Naive thymus-derived CD4-positive, alpha-beta T cell (primary cell): ENCODE measurements at regions of chr10 and their contacts with region 1.

Region 1: GRCh38 chr10:102673819-102674511 is 29.7 kb downstream of the TRIM8 start:
- DNase-seq: peak; percentile 34 to 91 (median 89)
- ATAC-seq: peak; percentile 91
- H3K4me3 ChIP-seq: peak overlapping the region; percentile 52
- H3K4me3 Mint-ChIP-seq: peak overlapping the region; percentile 78 to 93 (median 85)
- H3K27ac ChIP-seq: peak overlapping the region; percentile 85
- H3K27ac Mint-ChIP-seq: peak overlapping the region; percentile 75 to 97 (median 91)
- H3K4me1 ChIP-seq: peaks cover 18 to 41% of the 10 kb centered on the region in 2 donors
- H3K4me1 Mint-ChIP-seq: peaks cover 36 to 82% (median 58%) of the 10 kb centered on the region in 7 donors
- H3K27me3 ChIP-seq: no peaks in the 10 kb centered on the region
- H3K27me3 Mint-ChIP-seq: no peaks in the 10 kb centered on the region

Region 2: DNA sequence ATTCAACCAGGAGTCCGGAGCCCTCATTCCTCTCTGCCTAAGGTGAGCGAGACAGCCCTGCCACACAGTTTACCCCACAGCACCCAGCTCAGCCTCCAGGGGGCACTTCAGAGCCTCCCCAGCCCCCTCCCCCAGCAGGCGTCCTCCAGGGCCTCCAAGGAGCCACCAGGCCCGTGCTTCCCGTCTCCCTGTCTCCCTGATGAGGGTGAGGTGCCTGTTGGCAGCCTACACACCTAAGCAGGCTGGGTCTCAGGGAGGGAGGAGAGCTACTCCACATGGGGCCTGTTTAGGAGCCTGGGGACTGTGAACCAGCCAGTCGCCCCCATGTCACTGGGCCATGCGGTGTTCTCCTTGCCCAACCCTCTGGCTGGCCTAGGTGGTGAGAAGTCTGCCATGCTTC is 58.6 kb before region 1 on chr10:
- CTCF ChIA-PET with region 1: no interaction called
- POLR2A ChIA-PET with region 1: interaction called, 3 read pairs
- intact Hi-C with region 1: loop called in 1 of 2 experiments (anchors 5 kb)
- DNase-seq: no peak
- ATAC-seq: no peak
- H3K4me3 ChIP-seq: no peak overlapping the region
- H3K4me3 Mint-ChIP-seq: no peak overlapping the region
- H3K27ac ChIP-seq: no peak overlapping the region
- H3K27ac Mint-ChIP-seq: peak overlapping the region in 6 of 9 donors; percentile 29 to 84 (median 53)
- H3K4me1 ChIP-seq: peaks cover 0 to 35% of the 10 kb centered on the region in 2 donors
- H3K4me1 Mint-ChIP-seq: peaks cover 7 to 36% (median 32%) of the 10 kb centered on the region in 7 donors
- H3K27me3 ChIP-seq: no peaks in the 10 kb centered on the region
- H3K27me3 Mint-ChIP-seq: no peaks in the 10 kb centered on the region

Region 3: GRCh38 chr10:102652170-102652916 is 21.6 kb before region 1 on chr10:
- CTCF ChIA-PET with region 1: interaction called, 22 read pairs
- POLR2A ChIA-PET with region 1: interaction called, 169 read pairs
- intact Hi-C with region 1: no loop called
- DNase-seq: no peak
- ATAC-seq: peak; percentile 14
- H3K4me3 ChIP-seq: peak overlapping the region; percentile 37
- H3K4me3 Mint-ChIP-seq: peak overlapping the region; percentile 44 to 99 (median 70)
- H3K27ac ChIP-seq: peak overlapping the region; percentile 98
- H3K27ac Mint-ChIP-seq: peak overlapping the region; percentile 41 to 96 (median 92)
- H3K4me1 ChIP-seq: peaks cover 58 to 59% of the 10 kb centered on the region in 2 donors
- H3K4me1 Mint-ChIP-seq: peaks cover 62 to 75% (median 68%) of the 10 kb centered on the region in 7 donors
- H3K27me3 ChIP-seq: no peaks in the 10 kb centered on the region
- H3K27me3 Mint-ChIP-seq: no peaks in the 10 kb centered on the region

Region 4: DNA sequence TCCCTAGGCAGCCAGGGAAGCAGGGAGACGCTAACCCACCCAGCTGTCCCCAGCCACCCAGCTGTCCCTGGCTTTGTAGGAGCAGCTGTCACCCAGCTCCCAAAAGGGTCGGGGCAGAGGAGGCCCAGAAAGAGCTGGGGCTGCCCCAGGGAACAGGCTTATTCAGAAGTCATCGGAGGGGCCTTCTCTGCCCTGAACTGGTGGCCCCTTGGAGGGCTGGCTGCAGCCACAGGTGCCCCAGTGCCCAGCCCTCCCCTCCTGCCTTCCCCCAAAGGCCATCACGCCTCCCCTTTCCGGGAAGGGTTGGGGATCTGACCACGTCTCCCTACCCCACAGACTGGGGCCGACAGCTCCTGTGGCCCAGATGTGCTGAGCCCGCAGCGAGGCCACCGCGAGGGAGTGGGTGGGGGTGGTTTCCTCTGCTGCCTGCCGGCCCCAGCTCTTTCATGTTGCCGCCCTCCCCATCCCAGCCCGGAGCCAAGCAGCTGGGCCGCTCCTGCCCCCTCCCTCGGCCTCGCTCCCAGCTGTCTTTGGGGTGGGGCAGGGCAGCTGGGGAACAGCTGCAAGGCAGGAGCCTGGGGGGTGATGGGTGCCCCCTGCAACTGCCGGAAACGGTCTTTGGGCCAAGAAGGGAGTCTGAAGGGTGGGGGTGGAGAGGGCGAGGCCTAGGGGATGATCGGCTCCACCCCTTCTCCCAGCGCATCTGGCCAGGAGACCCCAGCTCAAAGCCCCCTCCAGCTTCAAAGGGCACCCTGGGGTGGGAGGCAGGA is 12.9 kb before region 1 on chr10:
- CTCF ChIA-PET with region 1: interaction called, 6 read pairs
- POLR2A ChIA-PET with region 1: interaction called, 68 read pairs
- intact Hi-C with region 1: loop called (anchors 1 kb)
- DNase-seq: peak in 7 of 9 donors; percentile 24 to 84 (median 44)
- ATAC-seq: peak; percentile 85
- H3K4me3 ChIP-seq: peak overlapping the region; percentile 35
- H3K4me3 Mint-ChIP-seq: peak overlapping the region; percentile 33 to 76 (median 64)
- H3K27ac ChIP-seq: peak overlapping the region; percentile 46
- H3K27ac Mint-ChIP-seq: peak overlapping the region in 7 of 9 donors; percentile 28 to 90 (median 79)
- H3K4me1 ChIP-seq: peaks cover 17 to 34% of the 10 kb centered on the region in 2 donors
- H3K4me1 Mint-ChIP-seq: peaks cover 27 to 48% (median 38%) of the 10 kb centered on the region in 7 donors
- H3K27me3 ChIP-seq: no peaks in the 10 kb centered on the region
- H3K27me3 Mint-ChIP-seq: no peaks in the 10 kb centered on the region

Region 5: GRCh38 chr10:102743588-102744373 is 69.8 kb after region 1 on chr10 and contains the start of gene WBP1L:
- CTCF ChIA-PET with region 1: no interaction called
- POLR2A ChIA-PET with region 1: no interaction called
- intact Hi-C with region 1: loop called in 1 of 2 experiments (anchors 1 kb)
- DNase-seq: peak; percentile 77 to 98 (median 96)
- ATAC-seq: peak; percentile 98
- H3K4me3 ChIP-seq: peak within 1 kb of the TSS; percentile 85
- H3K4me3 Mint-ChIP-seq: peak within 1 kb of the TSS; percentile 80 to 97 (median 93)
- H3K27ac ChIP-seq: peak within 1 kb of the TSS; percentile 77
- H3K27ac Mint-ChIP-seq: peak within 1 kb of the TSS; percentile 57 to 96 (median 90)
- H3K4me1 ChIP-seq: peaks cover 17 to 25% of the 10 kb centered on the region in 2 donors
- H3K4me1 Mint-ChIP-seq: peaks cover 33 to 59% (median 48%) of the 10 kb centered on the region in 7 donors
- H3K27me3 ChIP-seq: no peaks in the 10 kb centered on the region
- H3K27me3 Mint-ChIP-seq: no peaks in the 10 kb centered on the region
- total RNA-seq, gene WBP1L: 20.5 to 37.9 (median 34.1) TPM

Region 6: GRCh38 chr10:103204353-103205255 is 530.6 kb after region 1 on chr10:
- CTCF ChIA-PET with region 1: no interaction called
- POLR2A ChIA-PET with region 1: no interaction called
- intact Hi-C with region 1: no loop called
- DNase-seq: no peak
- ATAC-seq: no peak
- H3K4me3 ChIP-seq: no peak overlapping the region
- H3K4me3 Mint-ChIP-seq: no peak overlapping the region
- H3K27ac ChIP-seq: no peak overlapping the region
- H3K27ac Mint-ChIP-seq: peak overlapping the region in 1 of 9 donors; percentile 2
- H3K4me1 ChIP-seq: no peaks in the 10 kb centered on the region
- H3K4me1 Mint-ChIP-seq: no peaks in the 10 kb centered on the region
- H3K27me3 ChIP-seq: no peaks in the 10 kb centered on the region
- H3K27me3 Mint-ChIP-seq: peaks cover 0 to 3% (median 0%) of the 10 kb centered on the region in 5 donors